IMR-90 (cell line): ENCODE measurements at regions of chr2 and their contacts with region 1.

Region 1: GRCh38 chr2:232142049-232142448 is 180.5 kb downstream of the DIS3L2 start:
- DNase-seq: peak; percentile 31
- ATAC-seq: 0 out of 2 replicates have a peak, but pooled peaks have one; percentile 38
- H3K4me3 ChIP-seq: no peak overlapping the region
- H3K27ac ChIP-seq: no peak overlapping the region
- H3K4me1 ChIP-seq: peaks cover 6% of the 10 kb centered on the region
- H3K27me3 ChIP-seq: no peaks in the 10 kb centered on the region
- CTCF ChIP-seq: peak; percentile 59
- POLR2A ChIP-seq: no peak
- RAD21 ChIP-seq: peak; percentile 68

Region 2: DNA sequence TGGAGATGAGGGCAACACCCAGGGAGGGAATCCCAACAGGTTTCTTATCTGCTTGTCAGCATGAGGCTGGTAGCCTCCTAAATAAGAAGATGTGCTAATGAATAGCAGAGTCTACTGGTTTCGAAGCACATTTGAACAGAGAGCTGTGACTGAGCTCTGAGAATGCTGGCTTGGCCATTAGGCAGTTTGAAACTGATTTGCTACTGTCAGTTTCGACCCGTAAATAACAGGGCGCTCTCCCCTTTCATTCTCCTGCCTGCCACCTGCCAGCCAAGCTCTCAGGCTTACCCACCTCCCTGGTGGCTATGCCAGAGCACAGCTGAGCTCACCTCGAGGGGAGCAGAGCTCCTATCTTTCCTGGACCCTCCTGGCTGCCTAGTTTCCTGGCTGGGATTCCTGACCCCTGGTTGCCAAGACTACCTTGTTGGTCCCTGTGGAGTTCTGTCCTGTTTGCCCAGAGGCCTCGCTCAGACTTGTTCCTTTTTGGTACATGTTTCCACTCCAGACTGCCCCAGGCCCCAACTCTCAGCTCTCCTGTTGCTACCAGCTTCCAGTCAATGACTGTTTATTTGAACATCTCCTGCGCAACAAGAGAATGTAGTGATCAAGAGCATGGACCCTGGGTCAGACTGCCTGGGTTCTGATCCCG is 134.2 kb after region 1 on chr2:
- CTCF ChIA-PET with region 1: no interaction called
- POLR2A ChIA-PET with region 1: no interaction called
- dilution Hi-C with region 1: no loop called
- in situ Hi-C with region 1: no loop called
- intact Hi-C with region 1: no loop called
- DNase-seq: no peak
- ATAC-seq: no peak
- H3K4me3 ChIP-seq: no peak overlapping the region
- H3K27ac ChIP-seq: no peak overlapping the region
- H3K4me1 ChIP-seq: no peaks in the 10 kb centered on the region
- H3K27me3 ChIP-seq: no peaks in the 10 kb centered on the region
- CTCF ChIP-seq: no peak
- POLR2A ChIP-seq: no peak
- RAD21 ChIP-seq: no peak

Region 3: DNA sequence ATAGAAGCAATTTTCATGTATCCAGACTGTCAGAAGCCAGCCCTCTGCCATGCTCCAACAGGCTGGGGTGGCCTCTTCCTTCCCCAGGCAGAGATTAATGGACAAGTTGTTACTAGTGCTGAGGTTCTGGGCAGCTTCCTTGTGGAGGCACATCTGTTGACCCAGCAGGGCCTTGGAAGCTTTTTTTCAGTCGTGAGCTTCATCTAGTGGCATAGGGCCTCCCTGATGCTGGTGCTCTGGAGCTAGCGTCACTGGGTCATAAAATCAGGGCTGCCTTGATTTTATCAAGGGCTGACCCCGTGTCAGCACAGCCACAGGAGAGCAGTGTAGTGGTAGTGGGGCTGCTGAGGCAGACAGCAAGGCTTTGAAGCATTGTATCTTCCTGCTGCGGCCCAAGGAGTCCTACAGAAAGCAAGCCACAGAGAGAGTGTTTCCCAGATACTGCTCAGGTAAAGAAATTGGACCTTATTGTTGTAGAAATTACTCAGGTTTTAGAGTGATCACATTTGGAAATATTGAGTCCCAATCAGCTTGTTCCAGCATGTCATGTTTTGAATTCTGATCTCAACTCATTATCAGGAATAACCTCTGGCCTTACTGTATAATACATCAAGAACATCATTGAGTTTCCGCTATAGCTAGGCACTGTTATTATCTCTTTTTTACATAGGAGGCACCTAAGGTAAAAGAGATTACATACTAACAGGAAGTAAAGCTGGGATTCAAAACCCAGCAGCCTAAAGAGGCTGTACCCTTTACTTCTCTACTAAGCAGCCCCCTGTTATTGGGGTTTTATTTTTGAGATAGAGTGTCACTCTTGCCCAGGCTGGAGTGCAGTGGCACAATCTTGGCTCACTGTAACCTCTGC is 144.2 kb after region 1 on chr2:
- CTCF ChIA-PET with region 1: no interaction called
- POLR2A ChIA-PET with region 1: no interaction called
- dilution Hi-C with region 1: no loop called
- in situ Hi-C with region 1: no loop called
- intact Hi-C with region 1: loop called (anchors 5 kb)
- DNase-seq: no peak
- ATAC-seq: no peak
- H3K4me3 ChIP-seq: no peak overlapping the region
- H3K27ac ChIP-seq: no peak overlapping the region
- H3K4me1 ChIP-seq: peaks cover 1% of the 10 kb centered on the region; the same call in 1 of the 2 replicates
- H3K27me3 ChIP-seq: no peaks in the 10 kb centered on the region
- CTCF ChIP-seq: no peak
- POLR2A ChIP-seq: no peak
- RAD21 ChIP-seq: no peak

Region 4: DNA sequence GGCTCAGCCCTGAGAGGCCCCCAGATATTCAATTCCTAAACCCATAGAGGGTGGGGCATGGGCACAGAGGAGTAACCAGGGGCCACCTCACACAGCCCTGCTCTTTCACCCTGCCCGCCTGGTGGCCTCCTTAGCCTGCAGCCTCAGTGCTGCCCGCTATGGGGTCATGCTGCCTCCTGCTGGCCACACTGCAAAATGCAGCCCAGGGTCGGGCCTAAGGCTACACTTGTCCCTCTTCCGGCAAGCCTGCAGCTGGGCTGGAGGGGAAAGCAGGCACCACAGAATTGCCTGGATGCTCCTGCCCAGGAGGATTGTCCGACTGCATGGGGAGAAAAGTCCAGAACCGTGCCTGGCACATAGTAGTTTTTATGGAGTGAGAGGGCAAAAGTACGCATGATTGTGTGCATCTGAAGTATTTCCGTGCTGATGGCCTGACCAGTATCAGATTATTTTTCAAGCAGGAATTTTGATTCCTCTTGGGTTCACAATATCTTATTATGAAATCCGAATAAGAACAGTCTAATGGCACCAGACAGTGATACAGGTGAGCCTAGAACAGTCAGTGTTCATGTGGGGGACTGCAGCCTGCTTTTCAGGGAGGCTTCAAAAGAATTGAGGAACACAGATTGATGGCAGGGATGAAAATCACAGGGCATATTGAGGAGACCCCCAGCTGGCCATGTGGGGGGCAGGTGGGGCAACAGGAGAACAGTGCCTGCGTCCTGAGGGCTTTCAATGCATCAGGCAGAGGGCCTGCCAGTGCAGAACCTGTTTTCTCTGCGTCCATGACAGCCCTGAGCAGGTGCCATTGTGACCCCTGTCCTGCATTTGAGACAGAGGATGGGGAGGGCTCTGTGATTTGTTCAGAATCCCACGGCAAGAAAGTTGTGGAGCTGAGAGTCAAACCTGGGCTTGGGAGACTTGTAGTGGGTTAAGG is 185.3 kb after region 1 on chr2:
- CTCF ChIA-PET with region 1: no interaction called
- POLR2A ChIA-PET with region 1: no interaction called
- dilution Hi-C with region 1: no loop called
- in situ Hi-C with region 1: no loop called
- intact Hi-C with region 1: loop called (anchors 5 kb)
- DNase-seq: peak; percentile 50
- ATAC-seq: peak; percentile 90
- H3K4me3 ChIP-seq: no peak overlapping the region
- H3K27ac ChIP-seq: no peak overlapping the region
- H3K4me1 ChIP-seq: no peaks in the 10 kb centered on the region
- H3K27me3 ChIP-seq: no peaks in the 10 kb centered on the region
- CTCF ChIP-seq: peak; percentile 72
- POLR2A ChIP-seq: no peak
- RAD21 ChIP-seq: peak; percentile 72